ENCODE measurements at regions of chr10 and their contacts with region 1.

Region 1: GRCh38 chr10:114703377-114704107 is 45.5 kb upstream of the ABLIM1 start:
- DNase-seq: no peak
- H3K4me3 ChIP-seq: no peak overlapping the region
- H3K27me3 ChIP-seq: no peaks in the 10 kb centered on the region
- CTCF ChIP-seq: peak; percentile 75

Region 2: DNA sequence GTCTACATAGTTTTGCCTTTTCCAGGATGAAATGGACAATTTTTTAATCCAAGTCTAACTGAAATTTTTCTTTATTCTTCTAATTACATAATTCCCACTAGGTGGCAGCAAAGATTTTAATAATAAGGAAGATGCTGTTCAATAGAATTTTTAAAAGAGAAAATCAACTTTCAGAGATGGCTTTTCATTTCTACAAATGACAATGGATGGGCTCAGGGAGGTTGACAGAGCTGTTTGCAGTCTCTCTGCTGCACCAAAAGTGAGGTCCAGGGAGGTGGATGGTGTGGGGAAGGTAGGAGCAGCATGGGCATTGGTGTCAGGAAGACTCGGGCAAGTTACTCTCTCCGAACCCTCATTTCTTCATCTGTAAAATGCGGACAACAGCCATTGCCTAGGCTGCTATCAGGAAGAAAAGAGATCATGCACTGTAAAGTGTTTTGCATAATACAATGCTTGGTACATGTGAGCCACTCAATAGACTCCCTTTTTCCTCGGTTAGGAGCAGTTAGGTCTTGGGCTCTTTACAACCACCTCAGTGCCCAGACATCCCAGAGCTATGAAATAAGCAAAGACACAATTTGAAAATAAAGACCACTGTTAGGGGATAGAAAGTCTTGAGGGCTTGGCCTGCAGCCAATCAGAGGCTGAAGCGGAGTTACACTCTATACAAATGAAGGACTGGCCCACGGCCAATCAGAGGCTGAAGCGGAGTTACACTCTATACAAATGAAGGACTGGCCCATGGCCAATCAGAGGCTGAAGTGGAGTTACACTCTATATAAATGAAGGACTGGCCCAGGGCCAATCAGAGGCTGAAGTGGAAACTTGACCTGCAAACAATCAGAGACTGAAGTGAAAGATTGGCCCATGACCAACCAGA is 152.5 kb before region 1 on chr10:
- CTCF ChIA-PET with region 1: interaction called, 62 read pairs
- POLR2A ChIA-PET with region 1: no interaction called
- DNase-seq: no peak
- H3K4me3 ChIP-seq: no peak overlapping the region
- H3K27me3 ChIP-seq: no peaks in the 10 kb centered on the region
- CTCF ChIP-seq: peak; percentile 13; the same call in 1 of the 2 replicates